ENCODE measurements at regions of chr15 and their contacts with region 1.

Region 1: GRCh38 chr15:69881766-69882165 is 216.0 kb downstream of the TLE3 start:
- DNase-seq: peak; percentile 88
- ATAC-seq: peak; percentile 91
- H3K4me3 ChIP-seq: no peak overlapping the region
- H3K4me3 Mint-ChIP-seq: peak overlapping the region; percentile 82
- H3K27ac ChIP-seq: no peak overlapping the region
- H3K27ac Mint-ChIP-seq: peak overlapping the region; percentile 92
- H3K4me1 ChIP-seq: peaks cover 22 to 35% of the 10 kb centered on the region in 2 donors
- H3K4me1 Mint-ChIP-seq: peaks cover 42% of the 10 kb centered on the region
- H3K27me3 ChIP-seq: peaks cover 0 to 18% (median 0%) of the 10 kb centered on the region in 4 experiments
- H3K27me3 Mint-ChIP-seq: no peaks in the 10 kb centered on the region
- CTCF ChIP-seq: no peak

Region 2: DNA sequence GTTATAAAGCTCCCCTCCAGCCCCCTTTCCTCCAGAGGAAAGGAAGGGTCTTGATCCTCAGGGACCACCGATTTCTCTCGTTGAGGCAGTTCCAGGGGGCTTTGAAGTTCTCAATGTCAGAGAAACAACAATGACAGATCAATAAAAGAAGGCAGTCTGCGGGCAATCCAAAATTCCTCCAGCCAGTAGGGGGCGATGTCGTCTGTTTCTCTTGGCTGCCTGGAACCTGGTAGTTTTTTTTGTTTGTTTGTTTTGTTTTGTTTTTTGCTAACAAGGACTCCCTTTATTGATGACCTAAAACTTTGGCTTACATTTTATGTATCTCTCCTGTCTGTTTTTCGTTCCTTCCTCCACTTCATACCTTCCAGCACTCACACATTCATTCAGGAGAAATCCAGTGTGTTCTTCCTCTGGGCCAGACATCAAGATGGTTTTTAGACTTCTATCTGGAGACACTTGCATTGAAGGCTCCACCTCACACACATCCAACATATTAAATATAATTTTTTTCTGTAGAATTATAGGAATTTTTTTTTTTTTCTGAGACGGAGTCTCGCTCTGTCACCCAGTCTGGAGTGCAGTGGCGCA is 152.5 kb before region 1 on chr15:
- CTCF ChIA-PET with region 1: interaction called, 4 read pairs
- POLR2A ChIA-PET with region 1: no interaction called
- intact Hi-C with region 1: loop called (anchors 5 kb)
- DNase-seq: peak; percentile 76
- ATAC-seq: peak; percentile 57
- H3K4me3 ChIP-seq: no peak overlapping the region
- H3K4me3 Mint-ChIP-seq: no peak overlapping the region
- H3K27ac ChIP-seq: no peak overlapping the region
- H3K27ac Mint-ChIP-seq: peak overlapping the region; percentile 10
- H3K4me1 ChIP-seq: peaks cover 6 to 20% of the 10 kb centered on the region in 2 donors
- H3K4me1 Mint-ChIP-seq: peaks cover 26% of the 10 kb centered on the region
- H3K27me3 ChIP-seq: peaks cover 0 to 10% (median 1%) of the 10 kb centered on the region in 4 experiments
- H3K27me3 Mint-ChIP-seq: peaks cover 6% of the 10 kb centered on the region
- CTCF ChIP-seq: peak; percentile 92

Region 3: GRCh38 chr15:69919816-69920215 is 38.0 kb after region 1 on chr15:
- CTCF ChIA-PET with region 1: interaction called, 5 read pairs
- POLR2A ChIA-PET with region 1: interaction called, 7 read pairs
- intact Hi-C with region 1: loop called (anchors 5 kb)
- DNase-seq: no peak
- ATAC-seq: no peak
- H3K4me3 ChIP-seq: no peak overlapping the region
- H3K4me3 Mint-ChIP-seq: no peak overlapping the region
- H3K27ac ChIP-seq: no peak overlapping the region
- H3K27ac Mint-ChIP-seq: peak overlapping the region; percentile 16
- H3K4me1 ChIP-seq: peaks cover 20 to 46% of the 10 kb centered on the region in 2 donors
- H3K4me1 Mint-ChIP-seq: peaks cover 40% of the 10 kb centered on the region
- H3K27me3 ChIP-seq: peaks cover 0 to 4% (median 0%) of the 10 kb centered on the region in 4 experiments
- H3K27me3 Mint-ChIP-seq: no peaks in the 10 kb centered on the region
- CTCF ChIP-seq: no peak

Region 4: DNA sequence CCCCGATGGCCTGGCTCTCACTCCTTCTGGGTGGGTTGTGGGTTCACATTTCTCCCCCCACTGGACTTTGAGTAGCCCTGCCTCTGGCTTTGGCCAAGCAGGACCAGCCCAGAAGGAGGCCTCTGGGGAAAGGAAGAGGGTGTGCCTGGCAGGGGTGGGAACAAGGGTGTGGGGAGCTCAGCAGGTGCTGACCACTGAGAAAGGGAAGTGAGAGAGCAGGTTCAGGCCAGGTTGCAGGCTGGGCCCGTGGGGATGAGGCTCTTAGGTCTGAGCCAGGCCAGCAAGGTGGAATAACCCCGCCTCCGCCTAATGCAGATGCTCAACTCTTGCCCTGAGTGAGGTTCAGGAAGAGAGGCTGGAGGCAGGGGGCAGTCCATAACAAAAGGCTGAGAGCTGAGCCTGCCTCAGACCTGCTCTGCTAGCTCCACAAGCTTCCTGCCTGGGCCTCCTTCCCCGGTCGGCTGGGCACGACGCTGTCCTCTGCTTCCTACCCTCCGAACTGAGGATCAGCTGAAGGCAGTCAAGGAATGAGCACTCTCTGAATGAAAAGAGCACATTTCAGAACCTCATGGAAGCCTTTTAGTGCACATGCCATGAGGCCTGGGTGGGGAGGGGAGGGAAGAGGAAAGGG is 133.2 kb after region 1 on chr15:
- CTCF ChIA-PET with region 1: interaction called, 4 read pairs
- POLR2A ChIA-PET with region 1: no interaction called
- intact Hi-C with region 1: loop called (anchors 2 kb)
- DNase-seq: peak; percentile 72
- ATAC-seq: peak; percentile 76
- H3K4me3 ChIP-seq: peak overlapping the region in 1 of 5 experiments; percentile 37
- H3K4me3 Mint-ChIP-seq: peak overlapping the region; percentile 76
- H3K27ac ChIP-seq: peak overlapping the region; percentile 81 to 84
- H3K27ac Mint-ChIP-seq: peak overlapping the region; percentile 97
- H3K4me1 ChIP-seq: peaks cover 69 to 77% of the 10 kb centered on the region in 2 donors
- H3K4me1 Mint-ChIP-seq: peaks cover 79% of the 10 kb centered on the region
- H3K27me3 ChIP-seq: no peaks in the 10 kb centered on the region
- H3K27me3 Mint-ChIP-seq: no peaks in the 10 kb centered on the region
- CTCF ChIP-seq: no peak

Region 5: DNA sequence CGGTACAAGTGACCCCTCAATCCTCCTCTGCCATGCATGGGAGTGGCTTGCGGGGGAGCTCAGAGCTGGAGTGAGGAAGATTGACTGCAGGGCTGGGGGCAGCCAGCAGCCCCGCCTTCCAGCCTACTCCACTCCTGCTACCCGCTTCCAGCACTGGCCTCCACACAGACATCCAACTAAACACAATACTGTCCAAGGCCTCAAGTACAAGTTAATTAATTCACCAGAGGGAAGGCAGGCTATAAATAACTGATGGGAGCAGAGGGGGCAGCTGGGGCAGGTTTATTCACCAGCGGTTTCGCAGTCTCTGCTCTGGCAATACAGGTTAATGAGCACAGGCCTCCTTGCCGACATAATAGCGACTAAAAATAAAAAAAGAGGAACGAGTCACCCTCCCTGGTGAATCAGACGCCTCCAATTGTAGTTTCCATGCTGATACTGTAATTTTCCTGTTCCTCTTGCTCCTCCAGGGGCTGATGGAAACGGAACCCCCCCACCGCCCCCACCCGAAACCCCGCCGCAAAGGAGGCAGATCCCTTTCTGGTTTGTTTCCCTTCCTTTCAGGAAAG is 382.3 kb after region 1 on chr15:
- CTCF ChIA-PET with region 1: no interaction called
- POLR2A ChIA-PET with region 1: no interaction called
- intact Hi-C with region 1: loop called (anchors 10 kb)
- DNase-seq: peak; percentile 71
- ATAC-seq: peak; percentile 54
- H3K4me3 ChIP-seq: no peak overlapping the region
- H3K4me3 Mint-ChIP-seq: peak overlapping the region; percentile 55
- H3K27ac ChIP-seq: no peak overlapping the region
- H3K27ac Mint-ChIP-seq: peak overlapping the region; percentile 68
- H3K4me1 ChIP-seq: peaks cover 88 to 96% of the 10 kb centered on the region in 2 donors
- H3K4me1 Mint-ChIP-seq: peaks cover 95% of the 10 kb centered on the region
- H3K27me3 ChIP-seq: peaks cover 0 to 3% (median 0%) of the 10 kb centered on the region in 4 experiments
- H3K27me3 Mint-ChIP-seq: no peaks in the 10 kb centered on the region
- CTCF ChIP-seq: no peak

Region 6: GRCh38 chr15:70528270-70528706 is 646.5 kb after region 1 on chr15:
- CTCF ChIA-PET with region 1: no interaction called
- POLR2A ChIA-PET with region 1: no interaction called
- intact Hi-C with region 1: loop called (anchors 5 kb)
- DNase-seq: peak; percentile 77
- ATAC-seq: peak; percentile 61
- H3K4me3 ChIP-seq: peak overlapping the region in 2 of 5 experiments; percentile 10 to 51
- H3K4me3 Mint-ChIP-seq: peak overlapping the region; percentile 70
- H3K27ac ChIP-seq: peak overlapping the region; percentile 54 to 78
- H3K27ac Mint-ChIP-seq: peak overlapping the region; percentile 88
- H3K4me1 ChIP-seq: peaks cover 36 to 42% of the 10 kb centered on the region in 2 donors
- H3K4me1 Mint-ChIP-seq: peaks cover 49% of the 10 kb centered on the region
- H3K27me3 ChIP-seq: peaks cover 0 to under 1% (median 0%) of the 10 kb centered on the region in 4 experiments
- H3K27me3 Mint-ChIP-seq: peaks cover 7% of the 10 kb centered on the region
- CTCF ChIP-seq: no peak

Measured in B cell (primary cell).